ENCODE measurements at regions of chr7 and their contacts with region 1.

Region 1: GRCh38 chr7:99616359-99617191 is at the start of gene ZSCAN25:
- DNase-seq: peak; percentile 92
- ATAC-seq: peak; percentile 93
- H3K4me3 Mint-ChIP-seq: peak within 1 kb of the TSS; percentile 92
- H3K27ac Mint-ChIP-seq: peak within 1 kb of the TSS; percentile 96
- H3K4me1 Mint-ChIP-seq: peaks cover 44% of the 10 kb centered on the region
- H3K27me3 Mint-ChIP-seq: no peaks in the 10 kb centered on the region
- total RNA-seq, gene ZSCAN25: 20.5 to 25.2 TPM

Region 2: DNA sequence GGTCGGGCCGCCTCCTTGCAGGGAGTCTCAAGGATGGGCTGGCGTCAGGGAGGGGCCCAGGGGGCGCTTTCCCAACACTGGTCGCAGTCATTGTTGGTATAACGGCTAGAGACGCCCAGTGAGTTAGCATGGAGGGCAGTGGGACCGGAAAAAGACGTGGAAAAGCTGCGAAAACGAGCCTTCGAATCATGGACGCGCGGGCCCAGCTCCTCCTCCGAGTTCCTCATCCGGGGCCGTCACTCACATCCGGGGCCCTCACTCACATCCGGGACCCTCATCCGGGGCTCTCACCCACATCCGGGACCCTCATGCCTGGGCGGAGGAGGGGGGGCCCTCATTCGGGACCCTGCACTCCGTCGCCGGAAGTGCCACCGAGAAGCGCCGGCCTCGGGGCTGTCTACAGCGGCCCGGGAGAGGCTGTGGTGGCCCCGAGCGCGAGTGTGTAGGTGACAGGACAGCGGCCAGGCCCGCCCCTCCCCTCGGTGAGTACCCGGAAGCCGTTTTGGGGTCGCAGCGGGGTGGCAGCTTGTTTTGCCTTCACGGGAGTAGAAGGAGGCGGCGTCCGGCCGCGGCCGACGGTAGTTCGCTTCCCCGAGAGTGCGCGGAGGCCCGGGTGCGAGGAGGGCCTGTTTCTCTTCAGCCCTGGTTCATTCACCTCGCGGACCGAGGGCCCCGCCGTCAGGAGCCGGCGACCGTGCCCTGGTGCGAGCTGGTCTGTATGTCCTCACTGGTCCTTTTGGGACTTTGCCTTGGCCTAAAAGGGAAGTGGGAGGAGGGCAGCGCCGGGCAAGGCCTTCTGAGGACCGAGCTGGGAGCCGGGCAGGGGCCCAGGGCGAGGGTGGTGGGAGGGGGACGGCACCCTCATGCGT is 58.0 kb before region 1 on chr7 and contains the start of gene ZNF655:
- CTCF ChIA-PET with region 1: interaction called, 3 read pairs
- POLR2A ChIA-PET with region 1: interaction called, 3 read pairs
- intact Hi-C with region 1: loop called (anchors 1 kb)
- DNase-seq: peak; percentile 90
- ATAC-seq: peak; percentile 75
- H3K4me3 Mint-ChIP-seq: peak within 1 kb of the TSS; percentile 94
- H3K27ac Mint-ChIP-seq: peak within 1 kb of the TSS; percentile 96
- H3K4me1 Mint-ChIP-seq: peaks cover 49% of the 10 kb centered on the region
- H3K27me3 Mint-ChIP-seq: no peaks in the 10 kb centered on the region
- total RNA-seq, gene ZNF655: 51.1 to 52.0 TPM

Region 3: DNA sequence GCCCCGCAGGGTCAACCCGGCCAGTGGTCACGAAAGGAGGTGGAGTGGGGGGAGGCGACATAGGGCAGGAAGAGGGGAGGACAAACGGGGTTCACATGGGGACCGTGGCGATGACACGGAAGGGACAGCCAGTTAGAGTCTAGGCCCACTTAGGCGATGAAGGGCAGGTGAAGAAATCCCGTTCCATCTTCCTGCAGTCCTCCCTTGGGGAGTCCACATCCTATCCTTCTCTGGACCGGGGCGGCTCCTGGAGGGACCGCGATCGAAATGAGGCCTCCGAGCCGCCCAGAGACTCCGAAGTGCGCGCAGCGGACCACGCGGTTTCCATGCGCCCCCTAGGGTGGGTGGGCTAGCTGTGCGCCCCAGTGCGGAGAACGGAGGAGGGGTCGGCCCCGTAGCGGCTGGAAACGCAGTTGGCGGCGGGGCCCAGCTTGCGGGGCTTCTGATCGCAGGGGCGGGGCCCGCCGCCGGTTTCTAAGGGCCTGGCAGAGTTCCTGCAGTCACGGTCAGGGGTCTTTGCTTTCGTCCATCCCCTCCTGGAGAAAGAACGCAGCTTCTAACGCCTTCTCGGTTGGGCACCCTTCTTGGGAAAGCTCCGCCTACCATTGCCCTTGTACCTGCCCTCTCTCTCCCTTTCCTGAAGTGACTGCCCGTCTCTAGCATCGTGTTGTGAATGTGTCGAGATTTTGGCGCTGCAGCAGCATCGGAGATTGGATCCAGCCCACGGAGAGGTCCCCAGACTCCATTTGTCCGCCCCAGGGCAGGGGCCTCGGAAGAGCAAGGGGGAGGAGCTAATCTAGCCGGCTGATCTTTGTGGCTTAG is 36.4 kb before region 1 on chr7:
- CTCF ChIA-PET with region 1: no interaction called
- POLR2A ChIA-PET with region 1: no interaction called
- intact Hi-C with region 1: loop called (anchors 2 kb)
- DNase-seq: peak; percentile 75
- ATAC-seq: peak; percentile 78
- H3K4me3 Mint-ChIP-seq: peak overlapping the region; percentile 70
- H3K27ac Mint-ChIP-seq: peak overlapping the region; percentile 73
- H3K4me1 Mint-ChIP-seq: peaks cover 19% of the 10 kb centered on the region
- H3K27me3 Mint-ChIP-seq: no peaks in the 10 kb centered on the region

Region 4: GRCh38 chr7:99643464-99643863 is 26.9 kb after region 1 on chr7:
- CTCF ChIA-PET with region 1: no interaction called
- POLR2A ChIA-PET with region 1: no interaction called
- intact Hi-C with region 1: no loop called
- DNase-seq: no peak
- ATAC-seq: no peak
- H3K4me3 Mint-ChIP-seq: no peak overlapping the region
- H3K27ac Mint-ChIP-seq: no peak overlapping the region
- H3K4me1 Mint-ChIP-seq: peaks cover 46% of the 10 kb centered on the region
- H3K27me3 Mint-ChIP-seq: no peaks in the 10 kb centered on the region